A549 (cell line): ENCODE measurements at regions of chr1 and their contacts with region 1.

Region 1: GRCh38 chr1:110209715-110210603 is at the start of gene KCNC4:
- DNase-seq: peak; percentile 58 to 81
- ATAC-seq: peak; percentile 84 to 91
- H3K4me3 ChIP-seq: peak within 1 kb of the TSS; percentile 77
- H3K27ac ChIP-seq: peak within 1 kb of the TSS; percentile 83 to 94
- H3K4me1 ChIP-seq: peaks cover 4% of the 10 kb centered on the region; the same call in 2 of the 3 replicates
- CTCF ChIP-seq: no peak
- EP300 ChIP-seq: no peak
- POLR2A ChIP-seq: no peak
- RAD21 ChIP-seq: no peak
- polyA plus RNA-seq, gene KCNC4: 1.1 and 1.8 TPM in 2 replicates

Region 2: GRCh38 chr1:110118636-110119615 is 91.0 kb before region 1 on chr1:
- CTCF ChIA-PET with region 1: no interaction called
- POLR2A ChIA-PET with region 1: no interaction called
- DNase-seq: no peak
- ATAC-seq: no peak
- H3K4me3 ChIP-seq: no peak overlapping the region
- H3K27ac ChIP-seq: no peak overlapping the region
- H3K4me1 ChIP-seq: no peaks in the 10 kb centered on the region
- CTCF ChIP-seq: no peak
- EP300 ChIP-seq: no peak
- POLR2A ChIP-seq: no peak
- RAD21 ChIP-seq: no peak

Region 3: GRCh38 chr1:110176299-110176956 is 33.5 kb before region 1 on chr1:
- CTCF ChIA-PET with region 1: interaction called, 12 read pairs
- POLR2A ChIA-PET with region 1: no interaction called
- DNase-seq: no peak
- ATAC-seq: no peak
- H3K4me3 ChIP-seq: no peak overlapping the region
- H3K27ac ChIP-seq: no peak overlapping the region
- H3K4me1 ChIP-seq: no peaks in the 10 kb centered on the region
- CTCF ChIP-seq: no peak
- EP300 ChIP-seq: no peak
- POLR2A ChIP-seq: no peak
- RAD21 ChIP-seq: no peak

Region 4: DNA sequence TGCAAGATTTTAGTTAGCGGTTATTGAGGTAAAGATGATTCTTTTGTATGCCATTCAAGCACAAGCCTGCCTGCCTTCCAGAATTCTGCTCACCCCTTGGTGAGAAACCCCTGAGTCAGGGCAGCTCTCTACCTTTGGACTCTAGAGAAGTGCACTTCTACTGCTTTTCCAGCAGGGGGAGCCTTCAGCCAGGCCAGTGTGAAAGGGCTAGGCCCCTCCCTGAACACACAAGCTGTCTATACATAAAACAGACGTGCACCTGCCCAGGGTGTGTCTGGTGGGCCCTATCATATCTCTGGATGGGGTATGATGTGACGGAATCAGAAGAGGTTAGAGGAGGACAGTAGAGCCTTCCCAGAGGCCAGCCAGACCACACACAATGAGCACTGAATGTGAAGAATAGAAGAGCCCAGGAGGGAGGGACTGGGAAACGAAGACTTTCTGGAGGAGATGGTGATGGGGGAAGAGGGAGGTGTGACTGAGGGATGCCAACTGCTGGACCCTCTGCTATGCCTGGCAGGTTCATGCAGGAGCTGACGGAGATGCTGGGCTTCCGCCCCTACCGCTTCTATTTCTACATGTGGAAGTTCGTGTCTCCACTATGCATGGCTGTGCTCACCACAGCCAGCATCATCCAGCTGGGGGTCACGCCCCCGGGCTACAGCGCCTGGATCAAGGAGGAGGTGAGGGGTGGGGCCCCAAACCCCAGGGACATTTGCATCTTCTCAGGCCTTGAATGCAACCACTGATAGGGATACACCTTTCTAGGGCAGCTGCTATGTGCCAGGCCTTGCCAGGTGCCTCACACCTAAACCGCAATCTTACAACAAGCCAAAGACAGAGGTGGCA is 12.8 kb before region 1 on chr1:
- CTCF ChIA-PET with region 1: interaction called, 40 read pairs
- POLR2A ChIA-PET with region 1: no interaction called
- DNase-seq: peak; percentile 50 to 77
- ATAC-seq: peak; percentile 83 to 96
- H3K4me3 ChIP-seq: no peak overlapping the region
- H3K27ac ChIP-seq: no peak overlapping the region
- H3K4me1 ChIP-seq: no peaks in the 10 kb centered on the region
- CTCF ChIP-seq: peak; percentile 65
- EP300 ChIP-seq: no peak
- POLR2A ChIP-seq: no peak
- RAD21 ChIP-seq: peak; percentile 51 to 62

Region 5: GRCh38 chr1:110286564-110286963 is 76.6 kb after region 1 on chr1:
- CTCF ChIA-PET with region 1: interaction called, 19 read pairs
- POLR2A ChIA-PET with region 1: no interaction called
- DNase-seq: no peak
- ATAC-seq: no peak
- H3K4me3 ChIP-seq: no peak overlapping the region
- H3K27ac ChIP-seq: no peak overlapping the region
- H3K4me1 ChIP-seq: peaks cover 8% of the 10 kb centered on the region
- CTCF ChIP-seq: no peak
- EP300 ChIP-seq: no peak
- POLR2A ChIP-seq: no peak
- RAD21 ChIP-seq: no peak

Region 6: GRCh38 chr1:110307239-110307974 is 97.4 kb after region 1 on chr1:
- CTCF ChIA-PET with region 1: interaction called, 354 read pairs
- POLR2A ChIA-PET with region 1: no interaction called
- DNase-seq: no peak
- ATAC-seq: no peak
- H3K4me3 ChIP-seq: no peak overlapping the region
- H3K27ac ChIP-seq: no peak overlapping the region
- H3K4me1 ChIP-seq: no peaks in the 10 kb centered on the region
- CTCF ChIP-seq: no peak
- EP300 ChIP-seq: no peak
- POLR2A ChIP-seq: no peak
- RAD21 ChIP-seq: no peak

Region 7: DNA sequence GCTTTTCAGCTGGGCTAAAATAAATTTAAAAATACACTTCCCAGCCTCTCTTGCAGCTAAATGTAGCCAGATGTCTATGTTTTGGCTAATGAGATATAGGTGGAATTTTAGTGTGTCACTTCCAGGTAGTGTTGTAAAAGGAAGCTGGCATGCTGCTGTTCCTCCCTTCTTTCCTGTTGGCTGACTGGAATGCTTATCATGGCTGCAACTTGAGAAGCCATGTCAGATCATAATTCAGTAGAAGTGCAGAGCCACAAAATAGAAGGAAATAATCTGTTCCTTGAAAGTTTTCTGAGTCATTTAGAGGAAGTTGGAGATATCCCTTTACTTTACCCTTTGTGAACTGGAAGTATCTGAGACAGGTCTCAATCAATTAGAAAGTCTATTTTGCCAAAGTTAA is 118.3 kb after region 1 on chr1:
- CTCF ChIA-PET with region 1: interaction called, 28 read pairs
- POLR2A ChIA-PET with region 1: no interaction called
- DNase-seq: no peak
- ATAC-seq: no peak
- H3K4me3 ChIP-seq: no peak overlapping the region
- H3K27ac ChIP-seq: no peak overlapping the region
- H3K4me1 ChIP-seq: peaks cover 18% of the 10 kb centered on the region
- CTCF ChIP-seq: no peak
- EP300 ChIP-seq: no peak
- POLR2A ChIP-seq: no peak
- RAD21 ChIP-seq: no peak

Region 8: DNA sequence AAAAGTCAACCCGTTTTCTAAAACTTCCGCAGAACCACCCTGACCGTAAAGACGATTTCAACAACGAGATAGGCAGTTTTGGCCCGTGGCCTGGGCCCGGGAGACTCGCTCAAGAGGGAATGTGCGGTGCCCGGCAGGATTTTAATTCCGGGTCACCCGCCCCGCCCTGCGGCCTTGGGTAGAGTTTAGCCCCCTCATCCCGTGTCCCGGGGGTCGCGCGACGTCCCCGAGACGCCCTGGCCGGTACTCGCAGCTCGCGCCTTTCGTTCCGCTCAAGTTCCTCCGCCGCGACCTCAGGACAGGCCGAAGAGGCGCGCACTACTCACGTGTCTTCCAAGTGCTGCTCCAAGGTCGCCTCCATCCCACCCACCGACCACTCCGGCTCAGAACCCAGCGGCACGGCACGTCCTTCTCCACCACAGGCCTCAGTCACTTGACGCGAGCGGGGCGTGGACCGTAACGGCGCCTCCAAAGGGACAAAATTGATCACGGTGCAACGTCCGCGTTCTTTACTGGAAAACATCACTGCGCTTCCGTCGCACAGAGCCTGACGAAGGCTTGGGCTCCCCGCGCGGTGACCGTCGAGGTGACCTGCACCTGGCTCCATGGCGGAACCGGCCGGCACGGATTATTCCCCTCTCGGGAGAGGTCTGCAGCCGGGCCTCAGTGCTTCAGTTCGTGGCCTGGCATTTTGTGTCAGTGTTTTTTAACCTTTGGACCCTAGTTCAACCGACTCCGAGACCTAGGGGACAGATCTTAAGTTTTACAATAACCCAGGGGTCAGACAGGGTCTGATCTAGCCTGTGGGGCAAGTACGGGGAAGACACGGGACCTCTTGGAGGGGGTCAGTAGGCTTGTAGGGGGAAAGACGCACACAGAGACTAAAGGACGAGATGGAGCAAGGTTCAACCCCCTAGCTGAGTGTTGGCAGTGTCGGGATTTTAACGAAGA is 197.6 kb after region 1 on chr1 and contains the start of gene LAMTOR5:
- CTCF ChIA-PET with region 1: interaction called, 10 read pairs
- POLR2A ChIA-PET with region 1: no interaction called
- DNase-seq: peak; percentile 61 to 94
- ATAC-seq: peak; percentile 95 to 96
- H3K4me3 ChIP-seq: peak within 1 kb of the TSS; percentile 98
- H3K27ac ChIP-seq: peak within 1 kb of the TSS; percentile 98 to 99
- H3K4me1 ChIP-seq: peaks cover 14% of the 10 kb centered on the region
- CTCF ChIP-seq: no peak
- EP300 ChIP-seq: no peak
- POLR2A ChIP-seq: peak; percentile 69
- RAD21 ChIP-seq: peak; percentile 31 to 49; a peak in 3 of 5 replicates
- polyA plus RNA-seq, gene LAMTOR5: 256 and 314 TPM in 2 replicates